SK-N-SH (cell line): ENCODE measurements at regions of chr10 and their contacts with region 1.

Region 1: DNA sequence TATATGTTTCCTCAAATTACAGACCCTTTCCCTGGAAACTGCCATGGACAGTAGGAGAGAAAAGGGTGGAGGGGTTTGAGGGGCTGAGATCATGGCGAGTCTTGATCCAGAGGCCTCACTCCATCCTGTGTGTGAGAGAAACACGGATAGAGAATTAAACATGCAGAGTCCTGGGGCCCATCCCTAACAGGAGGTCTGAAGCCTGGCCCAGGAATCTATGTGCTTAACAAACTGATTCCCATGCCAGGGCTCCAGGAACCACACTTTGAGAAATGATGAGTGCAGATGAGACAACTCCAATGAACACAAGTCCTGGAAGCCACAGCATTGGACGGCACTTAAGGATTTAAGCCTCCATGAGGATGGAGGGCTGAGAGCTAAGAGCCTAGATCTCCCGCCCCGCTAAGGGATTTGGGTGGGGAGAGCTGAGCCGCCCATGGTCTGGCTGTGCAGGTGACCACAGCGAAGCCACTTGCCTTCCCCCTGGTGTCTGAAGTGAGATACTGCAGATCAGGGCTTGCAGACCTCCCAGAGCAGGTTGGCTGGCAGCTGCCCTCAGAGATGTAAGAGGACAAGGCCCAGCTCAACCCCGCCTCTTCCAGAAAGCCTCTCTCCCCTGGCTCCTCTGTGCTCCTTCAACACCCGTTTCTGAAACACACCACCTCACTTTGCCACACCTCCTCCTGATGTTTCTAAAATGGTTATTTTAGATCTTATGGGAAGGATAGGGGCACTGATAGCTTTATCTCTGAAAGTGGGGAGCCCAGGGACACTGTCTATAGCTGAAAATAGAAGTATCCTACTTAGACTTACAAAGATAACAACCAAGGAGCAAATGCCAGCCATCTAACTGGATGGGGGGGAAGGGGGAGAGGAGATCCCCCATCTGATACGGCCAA is 24.8 kb upstream of the EIF5AL1 start:
- DNase-seq: peak; percentile 77
- H3K4me3 ChIP-seq: no peak overlapping the region; a peak in 1 of 4 replicates
- H3K27ac ChIP-seq: peak overlapping the region; percentile 89 to 91
- H3K4me1 ChIP-seq: peaks cover 27 to 34% of the 10 kb centered on the region in 2 experiments
- H3K27me3 ChIP-seq: no peaks in the 10 kb centered on the region
- CTCF ChIP-seq: peak; percentile 73
- EP300 ChIP-seq: no peak
- RAD21 ChIP-seq: peak; percentile 78

Region 2: GRCh38 chr10:78540336-78541076 is 947.0 kb before region 1 on chr10:
- CTCF ChIA-PET with region 1: no interaction called
- POLR2A ChIA-PET with region 1: no interaction called
- DNase-seq: no peak
- H3K4me3 ChIP-seq: no peak overlapping the region
- H3K27ac ChIP-seq: no peak overlapping the region
- H3K4me1 ChIP-seq: peaks cover 0 to 26% of the 10 kb centered on the region in 2 experiments; a peak in 1 of 4 replicates
- H3K27me3 ChIP-seq: no peaks in the 10 kb centered on the region
- CTCF ChIP-seq: no peak
- EP300 ChIP-seq: no peak
- RAD21 ChIP-seq: no peak

Region 3: DNA sequence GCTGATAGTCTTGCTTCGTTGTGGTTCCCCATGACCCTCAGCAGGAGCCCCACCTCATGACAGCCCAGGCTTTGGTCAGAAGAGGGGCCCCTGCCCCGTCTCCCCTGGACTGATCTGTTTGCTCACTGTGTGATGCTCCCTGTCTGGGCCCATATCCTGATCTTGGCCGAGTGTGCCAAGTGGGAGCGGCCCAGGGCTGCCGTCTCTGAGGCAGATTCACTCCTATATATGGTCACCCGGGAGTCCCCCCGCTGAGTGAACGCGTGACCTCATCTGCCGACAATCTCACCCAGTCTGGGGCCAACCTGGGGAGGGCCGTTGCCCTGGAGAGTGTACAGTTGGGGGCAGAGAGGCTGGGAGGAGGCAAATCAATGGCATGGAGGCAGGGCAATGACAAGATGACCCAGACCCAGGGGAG is 105.7 kb before region 1 on chr10:
- CTCF ChIA-PET with region 1: interaction called, 13 read pairs
- POLR2A ChIA-PET with region 1: no interaction called
- DNase-seq: no peak
- H3K4me3 ChIP-seq: no peak overlapping the region
- H3K27ac ChIP-seq: peak overlapping the region in 1 of 2 experiments; percentile 65; a peak in 2 of 4 replicates
- H3K4me1 ChIP-seq: peaks cover 4 to 9% of the 10 kb centered on the region in 2 experiments; a peak in 1 of 4 replicates
- H3K27me3 ChIP-seq: no peaks in the 10 kb centered on the region
- CTCF ChIP-seq: no peak
- EP300 ChIP-seq: no peak; a peak in 1 of 4 replicates
- RAD21 ChIP-seq: no peak

Region 4: GRCh38 chr10:79390551-79391209 is 96.9 kb before region 1 on chr10:
- CTCF ChIA-PET with region 1: interaction called, 23 read pairs
- POLR2A ChIA-PET with region 1: no interaction called
- DNase-seq: peak; percentile 32
- H3K4me3 ChIP-seq: no peak overlapping the region
- H3K27ac ChIP-seq: no peak overlapping the region
- H3K4me1 ChIP-seq: peaks cover 0 to 20% of the 10 kb centered on the region in 2 experiments; a peak in 1 of 4 replicates
- H3K27me3 ChIP-seq: no peaks in the 10 kb centered on the region
- CTCF ChIP-seq: no peak
- EP300 ChIP-seq: no peak
- RAD21 ChIP-seq: no peak

Region 5: DNA sequence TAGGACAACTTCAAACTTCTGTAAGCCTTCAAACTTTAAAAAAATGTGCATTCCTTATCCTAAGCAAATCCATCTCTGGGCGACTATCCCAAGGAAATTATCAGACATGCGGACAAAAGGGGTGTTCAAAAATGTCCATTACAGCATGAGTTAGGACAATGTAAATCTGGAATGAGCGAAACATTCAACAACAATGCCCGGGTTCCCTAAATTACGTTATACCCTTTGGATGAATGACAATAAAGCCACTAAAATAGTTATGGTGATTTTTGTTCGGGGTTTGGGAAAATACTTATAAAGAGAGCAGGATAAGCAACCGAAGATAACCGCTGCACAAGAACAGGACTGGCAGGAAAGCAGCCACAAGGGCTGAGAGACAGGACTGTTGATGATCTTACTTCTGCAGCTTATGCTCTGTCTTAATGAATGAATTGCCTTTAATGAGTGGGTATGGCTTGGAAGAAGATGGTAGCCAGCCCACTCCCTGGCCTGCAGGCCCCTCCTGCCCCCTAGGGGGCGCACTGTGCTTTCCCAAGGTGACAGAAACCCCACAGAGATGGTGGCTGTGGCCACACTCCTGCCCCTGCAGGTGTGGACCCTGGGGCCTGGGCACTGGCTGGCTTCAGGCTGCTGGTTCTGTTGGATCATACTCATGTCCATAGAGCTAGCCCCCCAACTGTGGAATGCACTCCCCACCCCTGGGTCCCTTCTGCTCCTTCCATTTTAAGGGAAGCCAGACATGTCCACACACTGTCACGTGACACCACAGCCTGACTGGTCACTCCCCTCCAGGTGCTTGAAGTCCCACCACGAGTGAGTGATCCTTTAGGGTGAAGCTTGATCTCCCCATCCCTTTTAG is 87.2 kb before region 1 on chr10:
- CTCF ChIA-PET with region 1: interaction called, 10 read pairs
- POLR2A ChIA-PET with region 1: no interaction called
- DNase-seq: peak; percentile 78
- H3K4me3 ChIP-seq: peak overlapping the region in 1 of 2 experiments; percentile 26; a peak in 2 of 4 replicates
- H3K27ac ChIP-seq: peak overlapping the region; percentile 96
- H3K4me1 ChIP-seq: peaks cover 25 to 84% of the 10 kb centered on the region in 2 experiments
- H3K27me3 ChIP-seq: no peaks in the 10 kb centered on the region
- CTCF ChIP-seq: peak; percentile 80
- EP300 ChIP-seq: no peak
- RAD21 ChIP-seq: peak; percentile 71

Region 6: GRCh38 chr10:79459243-79459642 is 28.3 kb before region 1 on chr10:
- CTCF ChIA-PET with region 1: interaction called, 12 read pairs
- POLR2A ChIA-PET with region 1: no interaction called
- DNase-seq: no peak
- H3K4me3 ChIP-seq: no peak overlapping the region
- H3K27ac ChIP-seq: no peak overlapping the region
- H3K4me1 ChIP-seq: peaks cover 0 to 6% of the 10 kb centered on the region in 2 experiments; a peak in 1 of 4 replicates
- H3K27me3 ChIP-seq: no peaks in the 10 kb centered on the region; the same call in 1 of the 2 replicates
- CTCF ChIP-seq: no peak
- EP300 ChIP-seq: no peak
- RAD21 ChIP-seq: no peak